ENCODE measurements at regions of chr3 and their contacts with region 1.

Region 1: DNA sequence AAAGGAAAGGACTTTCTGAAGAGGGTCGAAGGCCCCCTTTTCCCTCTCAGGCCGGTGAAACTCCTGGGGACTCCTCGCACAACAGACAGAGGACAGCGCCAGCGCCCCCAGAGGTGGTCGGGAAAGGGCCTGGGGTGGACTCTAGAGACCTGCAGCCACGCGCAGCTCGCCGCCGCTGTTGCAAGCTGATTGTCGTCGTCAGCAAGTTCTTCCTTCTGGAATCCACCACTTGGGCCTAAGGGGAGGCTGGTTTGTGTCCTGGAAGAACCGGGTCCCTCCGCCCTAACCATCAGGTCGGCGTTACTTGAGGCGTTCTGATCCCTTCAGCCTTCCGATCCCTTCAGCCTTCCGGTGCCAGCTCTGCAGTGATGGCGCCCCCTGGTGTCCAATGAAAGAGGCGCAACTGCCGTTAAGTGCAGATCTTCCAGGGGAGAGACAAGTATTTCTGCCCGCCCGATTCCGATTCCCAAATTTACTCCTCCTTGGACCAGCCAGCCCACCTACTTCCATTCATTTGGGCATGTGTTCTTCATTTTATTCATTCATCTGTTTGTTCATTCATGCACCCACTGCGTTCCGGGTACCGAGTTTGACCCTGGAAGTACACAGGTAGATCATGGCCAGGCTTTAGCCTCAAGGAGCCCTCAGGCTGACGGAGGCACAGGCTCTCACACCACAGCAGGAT is 77.2 kb upstream of the SLC6A11 start:
- DNase-seq: peak; percentile 56 to 81 (median 69)
- ATAC-seq: peak; percentile 69
- H3K4me3 ChIP-seq: peak overlapping the region; percentile 40
- H3K4me3 Mint-ChIP-seq: no peak overlapping the region
- H3K27ac ChIP-seq: no peak overlapping the region
- H3K27ac Mint-ChIP-seq: no peak overlapping the region
- H3K4me1 ChIP-seq: peaks cover 8% of the 10 kb centered on the region
- H3K4me1 Mint-ChIP-seq: peaks cover 10% of the 10 kb centered on the region
- H3K27me3 ChIP-seq: peaks cover 21 to 29% of the 10 kb centered on the region in 2 experiments
- H3K27me3 Mint-ChIP-seq: peaks cover 73% of the 10 kb centered on the region
- CTCF ChIP-seq: peak; percentile 83

Region 2: GRCh38 chr3:10173926-10174435 is 564.8 kb before region 1 on chr3:
- CTCF ChIA-PET with region 1: no interaction called
- POLR2A ChIA-PET with region 1: no interaction called
- intact Hi-C with region 1: no loop called
- DNase-seq: peak in 2 of 14 experiments; percentile 71 to 82
- ATAC-seq: no peak
- H3K4me3 ChIP-seq: no peak overlapping the region
- H3K4me3 Mint-ChIP-seq: no peak overlapping the region
- H3K27ac ChIP-seq: no peak overlapping the region
- H3K27ac Mint-ChIP-seq: peak overlapping the region; percentile 56
- H3K4me1 ChIP-seq: peaks cover 11% of the 10 kb centered on the region
- H3K4me1 Mint-ChIP-seq: peaks cover 9% of the 10 kb centered on the region
- H3K27me3 ChIP-seq: no peaks in the 10 kb centered on the region
- H3K27me3 Mint-ChIP-seq: no peaks in the 10 kb centered on the region
- CTCF ChIP-seq: no peak

Region 3: DNA sequence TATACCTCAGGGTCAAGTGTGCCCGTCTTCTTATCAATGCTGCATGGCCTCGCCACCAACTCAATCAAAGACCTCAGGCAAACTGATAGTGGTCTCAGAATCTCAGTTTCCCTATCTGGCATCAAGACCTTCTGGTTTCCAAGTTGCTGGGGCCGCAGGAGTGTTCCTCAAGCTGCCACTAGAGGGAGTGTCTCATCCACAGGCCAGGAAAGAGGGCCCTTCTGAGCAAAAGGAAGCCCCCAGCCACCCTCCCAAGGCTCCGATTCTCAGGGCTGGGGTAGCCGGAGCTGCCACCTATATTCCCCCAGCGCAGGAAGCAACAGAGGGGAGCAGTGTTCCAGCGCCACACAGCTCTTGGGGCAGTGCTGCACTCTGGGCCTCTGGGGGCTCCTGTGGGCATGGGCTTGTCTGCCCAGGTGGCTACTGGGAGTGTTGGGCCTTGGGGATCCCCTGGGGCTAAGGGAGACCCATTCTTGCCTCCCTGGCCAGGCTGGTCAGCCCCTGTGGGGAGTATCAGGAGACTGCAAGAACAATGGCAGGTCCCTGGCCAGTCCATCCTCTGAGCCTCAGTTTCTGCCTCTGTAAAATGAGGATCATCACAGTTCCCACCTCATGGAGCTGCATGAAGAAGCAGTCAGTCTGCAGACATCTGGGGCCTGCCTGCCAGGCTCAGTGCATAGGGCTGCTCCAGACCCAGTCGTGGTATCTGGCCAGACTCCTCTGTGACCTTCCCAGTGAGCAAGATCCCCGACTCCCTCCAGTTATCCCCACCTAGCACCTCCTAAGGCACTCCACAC is 394.5 kb before region 1 on chr3:
- CTCF ChIA-PET with region 1: interaction called, 28 read pairs
- POLR2A ChIA-PET with region 1: interaction called, 4 read pairs
- intact Hi-C with region 1: loop called (anchors 1 kb)
- DNase-seq: peak; percentile 39 to 76 (median 48)
- ATAC-seq: peak; percentile 49
- H3K4me3 ChIP-seq: no peak overlapping the region
- H3K4me3 Mint-ChIP-seq: no peak overlapping the region
- H3K27ac ChIP-seq: no peak overlapping the region
- H3K27ac Mint-ChIP-seq: no peak overlapping the region
- H3K4me1 ChIP-seq: peaks cover 3% of the 10 kb centered on the region
- H3K4me1 Mint-ChIP-seq: no peaks in the 10 kb centered on the region
- H3K27me3 ChIP-seq: no peaks in the 10 kb centered on the region
- H3K27me3 Mint-ChIP-seq: peaks cover 4% of the 10 kb centered on the region
- CTCF ChIP-seq: peak; percentile 91

Region 4: DNA sequence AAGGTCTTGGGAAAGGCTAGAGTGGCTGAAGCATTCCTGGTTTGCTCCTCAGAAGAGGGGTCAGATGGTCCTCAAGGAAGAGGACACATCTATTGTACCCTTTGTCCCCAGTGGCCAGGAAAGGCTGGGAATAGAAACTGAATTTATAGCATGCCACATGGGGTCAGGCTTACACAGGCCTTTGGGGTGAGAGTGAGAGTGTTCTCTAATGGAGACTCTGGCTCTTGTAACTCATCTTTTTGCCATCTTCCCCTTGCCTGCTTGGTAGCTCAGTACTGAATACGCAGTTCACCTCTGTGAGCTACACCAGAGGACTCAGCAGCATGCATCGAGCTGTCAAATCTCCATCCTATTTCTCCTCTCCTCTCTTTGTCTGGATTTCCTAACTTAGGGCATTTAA is 321.0 kb before region 1 on chr3:
- CTCF ChIA-PET with region 1: interaction called, 6 read pairs
- POLR2A ChIA-PET with region 1: no interaction called
- intact Hi-C with region 1: loop called (anchors 1 kb)
- DNase-seq: peak in 3 of 14 experiments; percentile 14 to 32 (median 25)
- ATAC-seq: no peak
- H3K4me3 ChIP-seq: no peak overlapping the region
- H3K4me3 Mint-ChIP-seq: no peak overlapping the region
- H3K27ac ChIP-seq: no peak overlapping the region
- H3K27ac Mint-ChIP-seq: no peak overlapping the region
- H3K4me1 ChIP-seq: peaks cover 9% of the 10 kb centered on the region
- H3K4me1 Mint-ChIP-seq: peaks cover 12% of the 10 kb centered on the region
- H3K27me3 ChIP-seq: no peaks in the 10 kb centered on the region
- H3K27me3 Mint-ChIP-seq: peaks cover 6% of the 10 kb centered on the region
- CTCF ChIP-seq: no peak